PC-9 (cell line): ENCODE measurements at regions of chr17 and their contacts with region 1.

Region 1: GRCh38 chr17:2778489-2778888 is 17.7 kb upstream of the RAP1GAP2 start:
- DNase-seq: no peak
- H3K4me3 ChIP-seq: no peak overlapping the region
- H3K27ac ChIP-seq: no peak overlapping the region
- H3K4me1 ChIP-seq: no peaks in the 10 kb centered on the region
- H3K27me3 ChIP-seq: peaks cover 64% of the 10 kb centered on the region
- CTCF ChIP-seq: no peak

Region 2: GRCh38 chr17:2819921-2820501 is 41.5 kb after region 1 on chr17:
- CTCF ChIA-PET with region 1: no interaction called
- POLR2A ChIA-PET with region 1: interaction called, 16 read pairs
- intact Hi-C with region 1: no loop called
- DNase-seq: no peak
- H3K4me3 ChIP-seq: no peak overlapping the region
- H3K27ac ChIP-seq: no peak overlapping the region
- H3K4me1 ChIP-seq: peaks cover 2% of the 10 kb centered on the region; the same call in 1 of the 2 replicates
- H3K27me3 ChIP-seq: no peaks in the 10 kb centered on the region
- CTCF ChIP-seq: no peak

Region 3: DNA sequence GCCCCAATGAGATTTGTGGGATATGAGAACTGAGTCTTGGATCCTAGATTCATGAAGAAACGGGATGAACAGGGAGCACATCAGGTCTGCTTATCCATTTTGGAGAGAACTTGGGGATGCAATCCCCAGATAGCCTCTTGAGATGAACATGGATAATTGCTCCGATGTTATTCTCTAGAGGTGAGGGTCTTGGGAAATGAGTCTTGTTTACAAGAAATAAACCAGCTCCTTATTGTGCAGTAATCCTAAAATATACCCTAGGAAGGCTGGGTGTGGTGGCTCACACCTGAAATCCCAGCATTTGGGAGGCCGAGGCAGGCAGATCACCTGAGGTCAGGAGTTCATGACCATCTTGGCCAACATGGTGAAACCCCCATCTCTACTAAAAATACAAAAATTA is 325.8 kb after region 1 on chr17 and contains the start of gene OR1D2:
- CTCF ChIA-PET with region 1: no interaction called
- POLR2A ChIA-PET with region 1: no interaction called
- intact Hi-C with region 1: no loop called
- DNase-seq: no peak
- H3K4me3 ChIP-seq: no peak within 1 kb of the TSS
- H3K27ac ChIP-seq: no peak within 1 kb of the TSS
- H3K4me1 ChIP-seq: no peaks in the 10 kb centered on the region
- H3K27me3 ChIP-seq: peaks cover 84% of the 10 kb centered on the region
- CTCF ChIP-seq: no peak
- total RNA-seq, gene OR1D2: not detected in 2 replicates